RWPE1 (cell line): ENCODE measurements at regions of chr3 and their contacts with region 1.

Region 1: GRCh38 chr3:123028233-123028828 is 768 bp upstream of the SEMA5B start:
- DNase-seq: peak; percentile 79
- H3K27ac ChIP-seq: no peak overlapping the region; the same call in 1 of the 2 replicates
- CTCF ChIP-seq: peak; percentile 60

Region 2: DNA sequence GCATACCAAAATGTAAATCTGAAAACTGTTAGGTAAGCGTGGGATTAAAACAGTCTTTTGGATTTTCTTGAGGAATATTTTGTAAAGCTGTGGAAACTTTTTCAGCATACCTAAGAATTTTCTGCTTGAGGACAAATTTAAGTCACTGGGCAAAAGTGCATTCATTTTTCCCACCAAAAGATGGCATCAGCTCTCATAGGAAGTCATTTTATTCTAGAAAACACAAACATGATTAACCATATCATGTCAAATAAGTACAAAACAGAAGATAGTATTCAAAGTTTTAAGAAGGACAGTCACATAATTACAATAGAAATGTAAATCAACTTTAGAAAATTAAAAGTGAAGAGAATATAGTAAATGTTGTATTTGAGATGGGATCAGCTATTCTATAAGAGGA is 170.0 kb before region 1 on chr3:
- CTCF ChIA-PET with region 1: interaction called, 12 read pairs
- POLR2A ChIA-PET with region 1: interaction called, 5 read pairs
- DNase-seq: peak; percentile 28
- H3K27ac ChIP-seq: no peak overlapping the region
- CTCF ChIP-seq: peak; percentile 49